Heart right ventricle (tissue), 16 donors: ENCODE measurements at regions of chr4 and their contacts with region 1.

Region 1: DNA sequence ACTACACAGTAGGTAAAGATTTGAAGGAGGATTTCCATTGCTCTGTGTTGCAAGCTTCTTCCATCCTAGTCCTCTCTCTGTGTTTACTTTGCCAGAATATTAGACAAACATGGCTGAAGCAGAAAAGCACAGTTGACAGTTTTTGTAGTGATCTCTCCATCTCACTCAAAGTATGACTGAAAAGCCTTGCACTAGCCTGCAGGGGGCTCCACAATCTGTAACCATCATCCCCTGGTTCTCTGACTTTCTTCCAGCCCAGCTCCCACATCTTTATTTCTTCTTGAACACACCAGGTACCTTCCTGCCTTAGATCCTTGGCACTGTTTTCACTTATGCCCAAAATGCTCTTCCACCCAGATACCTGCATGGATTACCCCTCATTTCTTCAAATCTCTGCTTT is 34.1 kb upstream of the HHIP start:
- DNase-seq: no peak
- ATAC-seq: no peak
- H3K4me3 ChIP-seq: no peak overlapping the region
- H3K27ac ChIP-seq: no peak overlapping the region
- H3K4me1 ChIP-seq: no peaks in the 10 kb centered on the region
- H3K27me3 ChIP-seq: no peaks in the 10 kb centered on the region
- CTCF ChIP-seq: peak in 2 of 9 donors; percentile 32 to 35

Region 2: GRCh38 chr4:144376866-144377265 is 235.0 kb before region 1 on chr4:
- intact Hi-C with region 1: no loop called
- DNase-seq: no peak
- ATAC-seq: no peak
- H3K4me3 ChIP-seq: no peak overlapping the region
- H3K27ac ChIP-seq: no peak overlapping the region
- H3K4me1 ChIP-seq: no peaks in the 10 kb centered on the region
- H3K27me3 ChIP-seq: no peaks in the 10 kb centered on the region
- CTCF ChIP-seq: no peak

Region 3: DNA sequence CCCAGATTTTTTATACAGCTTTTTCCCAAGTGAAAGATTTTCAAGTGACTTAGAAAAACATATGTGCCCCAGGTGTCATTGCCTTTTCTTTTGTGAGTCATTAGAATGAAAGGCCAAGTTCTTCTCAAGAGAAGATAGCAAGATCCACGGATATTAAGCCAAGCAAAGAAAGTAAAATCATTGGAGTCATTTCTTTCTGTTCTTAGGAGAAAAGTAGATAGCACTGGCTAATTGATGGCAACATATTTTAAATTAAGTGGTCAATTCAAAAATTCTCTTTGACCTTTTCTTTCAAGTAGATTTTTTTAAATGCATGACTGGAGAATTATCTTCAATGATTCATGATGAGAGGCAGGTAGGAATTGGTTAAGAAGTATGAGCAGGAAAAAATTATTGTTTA is 128.5 kb after region 1 on chr4:
- intact Hi-C with region 1: loop called in 1 of 10 experiments (anchors 10 kb)
- DNase-seq: no peak
- ATAC-seq: no peak
- H3K4me3 ChIP-seq: no peak overlapping the region
- H3K27ac ChIP-seq: no peak overlapping the region
- H3K4me1 ChIP-seq: no peaks in the 10 kb centered on the region
- H3K27me3 ChIP-seq: no peaks in the 10 kb centered on the region
- CTCF ChIP-seq: no peak